ENCODE measurements at regions of chr6 and their contacts with region 1.

Region 1: DNA sequence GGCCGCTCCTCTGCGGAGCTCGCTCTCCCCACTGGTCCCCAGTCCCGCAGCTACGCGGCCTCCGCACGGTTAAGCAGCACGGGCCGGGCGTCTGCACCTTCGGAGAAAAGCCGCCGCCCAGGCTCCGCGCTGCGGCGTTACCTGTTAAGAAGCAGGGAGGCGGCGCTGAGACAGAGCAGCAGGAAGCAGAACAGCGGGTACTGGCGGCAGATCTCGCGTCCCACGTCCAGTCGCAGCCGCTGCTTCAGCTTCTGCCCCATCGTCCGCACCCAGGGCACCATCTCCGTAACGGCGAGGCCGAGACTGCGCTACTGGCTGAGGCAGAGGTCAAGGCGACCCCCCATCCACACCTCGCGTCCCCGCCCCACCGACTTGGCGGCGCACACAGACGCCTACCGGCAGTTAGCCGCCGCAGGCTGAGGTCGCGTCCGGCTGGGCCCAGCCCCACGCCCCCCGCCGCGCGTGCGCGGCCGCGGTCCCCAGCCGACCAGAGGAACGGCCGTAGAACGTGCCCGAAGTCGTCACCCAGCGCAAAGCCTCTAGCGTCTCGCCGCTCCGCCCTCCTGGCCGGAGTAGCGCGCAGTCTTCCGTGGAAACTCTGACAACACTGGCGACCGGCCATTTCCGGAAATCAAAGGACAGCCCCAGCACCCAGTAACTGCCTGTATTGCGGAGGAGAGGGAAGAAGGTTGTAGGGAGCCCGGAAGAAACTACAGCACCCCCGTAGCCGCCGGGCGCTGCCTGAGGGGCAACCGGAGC is at the start of gene SNX14:
- DNase-seq: peak; percentile 98
- ATAC-seq: peak; percentile 98
- total RNA-seq, gene SNX14: 38.0 to 39.5 TPM

Region 2: GRCh38 chr6:85632164-85632942 is 38.7 kb after region 1 on chr6:
- intact Hi-C with region 1: loop called in 1 of 2 experiments (anchors 5 kb)
- DNase-seq: no peak
- ATAC-seq: no peak

Region 3: GRCh38 chr6:85642774-85643536 is 49.3 kb after region 1 on chr6 and contains the start of gene SYNCRIP:
- intact Hi-C with region 1: loop called in 1 of 2 experiments (anchors 2 kb)
- DNase-seq: peak; percentile 99
- ATAC-seq: peak; percentile 90 to 92
- total RNA-seq, gene SYNCRIP: 48.7 to 84.9 TPM

Region 4: GRCh38 chr6:85678602-85679444 is 85.2 kb after region 1 on chr6:
- intact Hi-C with region 1: loop called in 1 of 2 experiments (anchors 5 kb)
- DNase-seq: peak; percentile 98
- ATAC-seq: peak; percentile 98

Region 5: DNA sequence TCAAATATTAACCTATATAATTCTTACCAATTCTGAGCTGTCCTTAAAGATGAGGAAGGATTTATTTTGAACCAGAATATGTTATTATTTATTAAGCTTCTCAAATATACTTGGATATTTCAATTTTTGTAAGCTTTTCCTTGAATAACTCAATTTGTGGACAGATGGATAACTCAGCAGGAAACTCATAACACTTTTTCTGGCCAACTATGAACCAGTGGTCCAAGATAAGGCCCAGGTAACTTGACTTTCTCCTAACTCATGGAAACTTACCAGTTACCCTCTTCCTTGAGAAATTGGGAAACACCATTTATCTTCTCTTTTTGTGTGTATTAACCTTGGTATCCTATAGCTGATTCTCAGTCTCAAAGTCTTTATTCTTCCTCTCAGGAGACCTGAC is 476.5 kb after region 1 on chr6:
- intact Hi-C with region 1: no loop called
- DNase-seq: no peak
- ATAC-seq: no peak

Measured in left cardiac atrium (tissue), 4 donors.